ENCODE measurements at regions of chr13 and their contacts with region 1.

Region 1: DNA sequence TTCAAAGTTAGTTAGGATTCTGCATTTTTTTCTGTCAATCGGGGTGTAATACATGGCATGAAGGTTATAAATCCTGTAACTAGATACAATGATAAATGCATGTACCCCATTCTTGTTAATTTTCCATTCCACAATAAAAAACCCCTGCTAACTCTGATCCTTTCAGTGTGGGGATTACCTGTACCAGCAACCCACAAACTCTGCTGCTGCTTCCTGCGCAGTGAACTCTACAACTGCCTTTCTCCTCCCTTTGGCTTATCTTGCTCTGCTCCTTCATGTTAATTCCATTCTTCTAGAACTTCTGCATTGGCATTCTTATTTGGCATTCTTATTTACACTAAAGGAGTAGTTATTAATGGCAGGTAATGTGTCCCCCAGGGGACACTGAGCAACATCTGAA is 273.1 kb downstream of the KLF12 start:
- DNase-seq: peak in 2 of 9 experiments; percentile 7 to 41
- ATAC-seq: no peak
- H3K4me3 ChIP-seq: no peak overlapping the region
- H3K4me3 Mint-ChIP-seq: no peak overlapping the region
- H3K27ac ChIP-seq: no peak overlapping the region
- H3K27ac Mint-ChIP-seq: peak overlapping the region; percentile 50
- H3K4me1 ChIP-seq: peaks cover 13% of the 10 kb centered on the region
- H3K4me1 Mint-ChIP-seq: peaks cover 48% of the 10 kb centered on the region
- H3K27me3 ChIP-seq: no peaks in the 10 kb centered on the region
- H3K27me3 Mint-ChIP-seq: no peaks in the 10 kb centered on the region
- CTCF ChIP-seq: no peak

Region 2: GRCh38 chr13:73702419-73703071 is 158.6 kb before region 1 on chr13:
- CTCF ChIA-PET with region 1: no interaction called
- POLR2A ChIA-PET with region 1: no interaction called
- intact Hi-C with region 1: no loop called
- DNase-seq: peak in 6 of 9 experiments; percentile 13 to 77 (median 38)
- ATAC-seq: peak; percentile 83
- H3K4me3 ChIP-seq: peak overlapping the region; percentile 2 to 4
- H3K4me3 Mint-ChIP-seq: peak overlapping the region; percentile 64
- H3K27ac ChIP-seq: peak overlapping the region; percentile 47 to 55
- H3K27ac Mint-ChIP-seq: peak overlapping the region; percentile 96
- H3K4me1 ChIP-seq: peaks cover 24% of the 10 kb centered on the region
- H3K4me1 Mint-ChIP-seq: peaks cover 32% of the 10 kb centered on the region
- H3K27me3 ChIP-seq: no peaks in the 10 kb centered on the region
- H3K27me3 Mint-ChIP-seq: no peaks in the 10 kb centered on the region
- CTCF ChIP-seq: no peak

Region 3: DNA sequence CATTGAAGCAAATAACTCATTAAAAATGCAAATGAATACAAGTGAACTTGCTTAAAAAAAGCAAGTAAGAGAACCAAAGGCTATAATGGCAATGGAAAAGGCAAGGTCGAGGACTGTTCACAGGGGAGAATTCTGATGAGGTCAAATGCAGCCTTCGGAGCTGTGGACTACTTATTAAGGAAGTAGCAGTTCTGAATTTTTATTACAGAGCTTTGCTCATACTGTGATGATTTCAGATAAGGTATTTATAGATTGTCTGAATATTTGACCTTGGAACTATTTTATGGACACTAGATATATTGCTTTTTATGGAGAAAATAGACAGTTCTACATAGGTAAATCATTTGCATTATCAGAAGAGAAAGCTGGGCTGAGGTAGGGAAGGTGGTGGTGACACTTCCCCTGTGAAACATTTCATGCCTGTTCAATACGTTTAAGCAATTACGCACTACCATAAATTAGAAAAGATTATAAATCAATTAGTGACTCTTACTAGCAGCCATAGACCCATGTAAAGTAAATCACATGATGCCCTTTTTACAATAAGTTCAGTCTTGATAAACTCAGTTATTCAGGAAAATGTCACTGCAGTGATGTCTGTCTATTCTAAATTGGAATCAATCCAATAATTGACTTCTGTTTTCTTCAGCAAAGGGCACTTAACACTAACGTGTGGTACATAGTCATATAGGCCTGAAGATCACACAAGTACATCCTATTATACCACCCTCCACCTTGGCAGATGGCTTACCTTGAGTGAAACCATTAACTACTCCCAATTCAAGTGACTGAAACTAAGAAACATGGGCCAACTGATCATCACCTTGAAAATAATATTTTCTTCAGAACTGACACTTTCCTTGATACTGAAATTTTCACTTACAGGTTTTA is 13.0 kb after region 1 on chr13:
- CTCF ChIA-PET with region 1: no interaction called
- POLR2A ChIA-PET with region 1: no interaction called
- intact Hi-C with region 1: loop called in 1 of 2 experiments (anchors 2 kb)
- DNase-seq: no peak
- ATAC-seq: no peak
- H3K4me3 ChIP-seq: no peak overlapping the region
- H3K4me3 Mint-ChIP-seq: no peak overlapping the region
- H3K27ac ChIP-seq: no peak overlapping the region
- H3K27ac Mint-ChIP-seq: no peak overlapping the region
- H3K4me1 ChIP-seq: peaks cover 12% of the 10 kb centered on the region
- H3K4me1 Mint-ChIP-seq: peaks cover 58% of the 10 kb centered on the region
- H3K27me3 ChIP-seq: no peaks in the 10 kb centered on the region
- H3K27me3 Mint-ChIP-seq: no peaks in the 10 kb centered on the region
- CTCF ChIP-seq: no peak

Region 4: DNA sequence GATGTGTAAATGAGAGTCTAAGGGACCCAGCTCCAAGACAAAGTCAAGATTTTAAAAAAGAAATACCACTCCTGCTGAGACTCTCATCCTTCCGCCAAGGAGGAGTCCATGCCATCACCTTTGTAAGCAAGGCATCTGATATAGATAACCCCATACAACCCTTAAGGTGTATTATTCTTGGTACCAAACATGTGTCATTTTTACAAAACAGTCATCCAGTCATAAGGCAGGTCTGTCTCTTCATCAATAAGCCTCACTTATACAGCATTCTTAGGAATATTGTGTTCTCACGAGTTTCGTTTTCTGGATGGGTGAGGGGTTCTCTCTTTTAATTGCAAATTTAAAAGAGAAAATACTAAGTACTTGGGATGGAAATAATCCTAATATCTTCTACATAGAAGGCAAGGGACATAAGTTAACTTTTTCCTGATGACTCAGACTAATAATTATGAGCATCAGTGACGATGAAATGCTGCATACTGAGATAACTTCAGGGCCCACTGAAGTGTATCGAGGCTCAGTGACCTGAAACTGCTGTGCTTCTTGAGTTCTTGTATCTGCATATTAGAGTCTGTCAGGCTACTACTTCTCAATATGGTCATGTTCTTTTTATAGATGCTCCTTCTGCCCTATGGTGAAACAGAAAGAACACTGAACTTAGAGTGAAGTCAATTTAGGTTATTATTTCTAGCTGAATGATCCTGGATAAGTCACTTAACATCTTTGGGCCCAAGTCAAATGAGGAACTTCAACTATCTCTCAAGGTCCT is 106.4 kb after region 1 on chr13:
- CTCF ChIA-PET with region 1: no interaction called
- POLR2A ChIA-PET with region 1: no interaction called
- intact Hi-C with region 1: no loop called
- DNase-seq: no peak
- ATAC-seq: no peak
- H3K4me3 ChIP-seq: no peak overlapping the region
- H3K4me3 Mint-ChIP-seq: no peak overlapping the region
- H3K27ac ChIP-seq: no peak overlapping the region
- H3K27ac Mint-ChIP-seq: peak overlapping the region; percentile 8
- H3K4me1 ChIP-seq: peaks cover 12% of the 10 kb centered on the region
- H3K4me1 Mint-ChIP-seq: peaks cover 78% of the 10 kb centered on the region
- H3K27me3 ChIP-seq: no peaks in the 10 kb centered on the region
- H3K27me3 Mint-ChIP-seq: no peaks in the 10 kb centered on the region
- CTCF ChIP-seq: no peak

Region 5: DNA sequence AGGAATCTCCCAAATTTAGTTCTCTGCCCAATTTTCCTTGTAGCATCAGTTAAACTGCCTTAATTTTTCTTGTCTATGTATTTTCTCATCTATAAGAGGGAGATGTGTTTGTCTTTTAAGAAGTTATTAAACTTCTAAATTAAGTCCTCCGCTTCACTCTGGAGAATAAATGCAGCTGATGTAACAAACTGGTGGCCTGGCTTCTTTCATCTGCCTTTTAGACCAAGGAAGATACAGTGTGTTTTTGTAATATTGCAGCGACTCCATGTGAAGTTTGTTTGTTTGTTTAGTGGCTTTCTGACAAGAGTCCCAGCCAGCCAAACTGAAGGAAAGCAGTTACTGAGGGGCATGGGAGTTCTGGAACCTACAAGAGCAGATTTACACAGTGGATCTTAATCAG is 216.7 kb after region 1 on chr13:
- CTCF ChIA-PET with region 1: no interaction called
- POLR2A ChIA-PET with region 1: no interaction called
- intact Hi-C with region 1: no loop called
- DNase-seq: no peak
- ATAC-seq: no peak
- H3K4me3 ChIP-seq: no peak overlapping the region
- H3K4me3 Mint-ChIP-seq: no peak overlapping the region
- H3K27ac ChIP-seq: no peak overlapping the region
- H3K27ac Mint-ChIP-seq: no peak overlapping the region
- H3K4me1 ChIP-seq: peaks cover 35% of the 10 kb centered on the region
- H3K4me1 Mint-ChIP-seq: peaks cover 81% of the 10 kb centered on the region
- H3K27me3 ChIP-seq: no peaks in the 10 kb centered on the region
- H3K27me3 Mint-ChIP-seq: no peaks in the 10 kb centered on the region
- CTCF ChIP-seq: no peak

Measured in CD8-positive, alpha-beta T cell (primary cell).